ENCODE measurements at regions of chr1 and their contacts with region 1.

Region 1: DNA sequence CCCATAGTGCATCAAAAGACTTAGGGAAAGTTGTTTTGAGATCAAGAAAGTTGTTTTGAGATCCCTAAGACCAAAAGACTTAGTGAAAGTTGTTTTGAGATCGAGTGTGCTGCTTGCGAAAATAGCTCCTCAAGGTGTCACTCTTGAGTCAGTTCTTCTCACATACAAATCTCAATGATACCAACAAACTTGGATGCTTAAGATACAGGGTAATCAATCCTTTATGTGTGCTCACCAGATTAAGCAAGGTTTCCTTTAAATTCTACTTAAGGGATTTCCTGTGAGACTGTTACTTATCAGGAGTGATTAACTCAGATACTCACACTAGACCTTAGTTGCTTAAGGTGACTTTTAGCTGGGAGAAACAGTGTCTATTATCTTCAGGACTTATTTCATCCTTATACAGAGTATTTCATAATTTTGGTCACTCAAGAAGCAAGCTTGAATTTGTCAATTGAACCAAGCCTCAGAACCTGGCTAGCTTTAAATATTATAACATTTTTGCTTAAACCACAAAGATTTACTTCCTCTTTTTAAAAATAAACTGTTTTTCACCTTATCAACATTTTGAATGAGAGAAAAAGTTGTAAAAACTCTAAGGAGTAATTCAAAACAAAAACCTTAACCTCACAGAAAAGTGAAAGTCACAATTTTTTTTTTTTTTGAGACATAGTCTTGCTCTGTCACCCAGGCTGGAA is 8.0 kb upstream of the RLF start:
- DNase-seq: peak; percentile 41
- CTCF ChIP-seq: peak; percentile 45

Region 2: GRCh38 chr1:40338745-40339424 is 185.7 kb after region 1 on chr1:
- in situ Hi-C with region 1: loop called (anchors 5 kb)
- DNase-seq: peak; percentile 77
- CTCF ChIP-seq: peak; percentile 98

Region 3: GRCh38 chr1:40404670-40405462 is 251.6 kb after region 1 on chr1:
- in situ Hi-C with region 1: loop called (anchors 10 kb)
- DNase-seq: no peak
- CTCF ChIP-seq: peak; percentile 65

Measured in GM13976 (cell line).